Activated B cell treated with CpG ODN at 0.5 μM for 24 hours (primary cell): ENCODE measurements at regions of chr22 and their contacts with region 1.

Region 1: GRCh38 chr22:39170825-39171622 is 18.5 kb upstream of the CBX7 start:
- DNase-seq: peak; percentile 85
- ATAC-seq: peak; percentile 83
- H3K4me3 Mint-ChIP-seq: peak overlapping the region; percentile 77
- H3K27ac Mint-ChIP-seq: peak overlapping the region; percentile 76
- H3K4me1 Mint-ChIP-seq: peaks cover 42% of the 10 kb centered on the region
- H3K27me3 Mint-ChIP-seq: no peaks in the 10 kb centered on the region
- CTCF ChIP-seq: peak; percentile 93

Region 2: DNA sequence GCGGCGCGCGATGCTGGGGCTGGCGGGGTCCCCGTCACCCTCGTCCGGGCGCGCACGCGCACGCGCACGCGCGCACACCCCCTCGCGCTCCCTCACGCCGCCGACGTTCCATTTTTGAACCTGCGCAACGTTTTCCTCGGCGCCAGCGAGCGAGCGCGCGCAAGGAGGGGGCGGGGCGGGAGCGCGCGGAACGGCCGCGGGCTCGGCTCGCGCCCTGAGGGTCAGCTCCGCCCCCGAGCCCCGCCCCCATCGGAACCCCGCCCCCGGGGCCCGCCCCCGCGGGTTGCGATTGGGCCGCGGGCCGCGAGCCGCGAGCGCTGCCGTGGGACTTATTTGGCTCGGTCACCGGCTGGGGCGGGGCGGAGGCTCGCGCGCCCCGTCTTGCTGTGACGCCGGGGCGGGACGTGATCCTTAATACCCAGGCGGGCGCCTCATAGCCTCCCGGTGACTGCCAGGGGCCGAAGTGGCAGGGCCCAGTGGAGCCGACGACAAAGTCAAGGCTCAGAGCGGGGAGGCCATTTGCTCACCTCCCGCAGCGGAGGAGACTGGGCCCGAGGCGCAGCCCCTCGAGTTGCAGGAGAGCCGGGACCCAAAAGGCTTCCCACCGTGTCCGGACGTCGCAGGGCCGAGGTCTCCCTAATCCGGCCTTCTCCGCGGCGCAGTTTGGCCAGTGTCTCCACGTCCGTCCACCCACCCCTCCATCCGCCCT is 18.4 kb before region 1 on chr22 and contains the start of gene CBX7:
- CTCF ChIA-PET with region 1: interaction called, 12 read pairs
- POLR2A ChIA-PET with region 1: interaction called, 3 read pairs
- intact Hi-C with region 1: loop called (anchors 2 kb)
- DNase-seq: peak; percentile 94
- ATAC-seq: peak; percentile 84
- H3K4me3 Mint-ChIP-seq: peak within 1 kb of the TSS; percentile 84
- H3K27ac Mint-ChIP-seq: peak within 1 kb of the TSS; percentile 76
- H3K4me1 Mint-ChIP-seq: peaks cover 46% of the 10 kb centered on the region
- H3K27me3 Mint-ChIP-seq: peaks cover 16% of the 10 kb centered on the region
- CTCF ChIP-seq: no peak
- total RNA-seq, gene CBX7: 42.6 and 45.4 TPM in 2 replicates

Region 3: DNA sequence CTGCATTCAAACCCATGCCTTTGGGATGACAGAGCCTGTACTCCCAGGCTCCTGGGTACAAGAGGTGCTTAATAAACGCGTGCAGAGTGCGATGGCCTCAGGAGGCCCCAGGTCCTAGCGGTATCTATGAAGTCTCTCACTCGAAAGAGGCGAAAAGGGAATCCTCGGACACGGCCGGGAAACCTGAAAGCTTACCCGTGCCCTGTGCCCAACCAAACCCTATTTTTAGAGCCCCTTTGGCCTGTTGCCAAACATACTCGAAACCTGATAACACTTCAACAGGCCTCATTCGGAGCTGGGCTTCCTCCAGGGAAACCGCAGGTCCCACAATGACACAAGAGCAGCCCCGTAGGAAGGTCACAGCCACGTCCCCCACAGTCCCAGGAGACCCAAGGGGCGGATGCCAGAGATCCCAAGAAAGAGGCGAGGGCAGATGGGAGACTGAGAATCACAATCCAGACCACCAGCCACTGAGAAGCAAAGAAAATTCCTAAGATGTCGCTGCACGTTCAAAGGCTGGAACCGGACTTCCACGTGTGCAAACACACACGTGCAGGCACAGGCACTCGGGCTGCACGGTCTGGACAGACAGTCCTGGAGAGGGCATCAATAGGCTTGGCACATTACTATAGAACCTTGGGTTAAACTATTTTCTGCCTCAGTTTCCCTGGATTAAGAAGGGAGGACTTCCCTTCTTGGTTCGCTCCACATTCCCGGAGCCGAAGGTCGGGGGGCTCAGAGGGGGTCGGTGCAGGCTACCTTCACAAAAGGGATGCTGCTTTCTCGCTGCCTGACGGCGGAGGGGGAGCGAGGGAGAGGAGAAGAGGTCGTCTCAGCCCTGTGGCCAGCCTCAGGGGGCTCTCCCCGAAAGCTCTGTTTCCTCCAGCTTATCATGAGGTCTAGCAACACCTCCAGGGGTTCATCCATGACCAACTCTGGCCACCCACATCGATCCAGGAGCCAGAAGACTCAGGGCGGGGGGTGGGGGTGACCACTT is 65.6 kb after region 1 on chr22:
- CTCF ChIA-PET with region 1: interaction called, 3 read pairs
- POLR2A ChIA-PET with region 1: no interaction called
- intact Hi-C with region 1: loop called (anchors 2 kb)
- DNase-seq: no peak
- ATAC-seq: peak; percentile 83
- H3K4me3 Mint-ChIP-seq: peak overlapping the region; percentile 50
- H3K27ac Mint-ChIP-seq: no peak overlapping the region
- H3K4me1 Mint-ChIP-seq: peaks cover 36% of the 10 kb centered on the region
- H3K27me3 Mint-ChIP-seq: peaks cover 73% of the 10 kb centered on the region
- CTCF ChIP-seq: no peak

Region 4: GRCh38 chr22:39306581-39307361 is 135.7 kb after region 1 on chr22:
- CTCF ChIA-PET with region 1: interaction called, 75 read pairs
- POLR2A ChIA-PET with region 1: interaction called, 30 read pairs
- intact Hi-C with region 1: loop called (anchors 1 kb)
- DNase-seq: no peak
- ATAC-seq: peak; percentile 29
- H3K4me3 Mint-ChIP-seq: no peak overlapping the region
- H3K27ac Mint-ChIP-seq: no peak overlapping the region
- H3K4me1 Mint-ChIP-seq: peaks cover 17% of the 10 kb centered on the region
- H3K27me3 Mint-ChIP-seq: no peaks in the 10 kb centered on the region
- CTCF ChIP-seq: no peak

Region 5: GRCh38 chr22:40036591-40037225 is 865.7 kb after region 1 on chr22:
- CTCF ChIA-PET with region 1: interaction called, 4 read pairs
- POLR2A ChIA-PET with region 1: no interaction called
- intact Hi-C with region 1: loop called (anchors 2 kb)
- DNase-seq: peak; percentile 43
- ATAC-seq: peak; percentile 95
- H3K4me3 Mint-ChIP-seq: no peak overlapping the region
- H3K27ac Mint-ChIP-seq: no peak overlapping the region
- H3K4me1 Mint-ChIP-seq: no peaks in the 10 kb centered on the region
- H3K27me3 Mint-ChIP-seq: peaks cover 19% of the 10 kb centered on the region
- CTCF ChIP-seq: no peak